Activated naive CD4-positive, alpha-beta T cell treated with anti-CD3 and anti-CD28 coated beads for 36 hours (primary cell): ENCODE measurements at regions of chrX and their contacts with region 1.

Region 1: DNA sequence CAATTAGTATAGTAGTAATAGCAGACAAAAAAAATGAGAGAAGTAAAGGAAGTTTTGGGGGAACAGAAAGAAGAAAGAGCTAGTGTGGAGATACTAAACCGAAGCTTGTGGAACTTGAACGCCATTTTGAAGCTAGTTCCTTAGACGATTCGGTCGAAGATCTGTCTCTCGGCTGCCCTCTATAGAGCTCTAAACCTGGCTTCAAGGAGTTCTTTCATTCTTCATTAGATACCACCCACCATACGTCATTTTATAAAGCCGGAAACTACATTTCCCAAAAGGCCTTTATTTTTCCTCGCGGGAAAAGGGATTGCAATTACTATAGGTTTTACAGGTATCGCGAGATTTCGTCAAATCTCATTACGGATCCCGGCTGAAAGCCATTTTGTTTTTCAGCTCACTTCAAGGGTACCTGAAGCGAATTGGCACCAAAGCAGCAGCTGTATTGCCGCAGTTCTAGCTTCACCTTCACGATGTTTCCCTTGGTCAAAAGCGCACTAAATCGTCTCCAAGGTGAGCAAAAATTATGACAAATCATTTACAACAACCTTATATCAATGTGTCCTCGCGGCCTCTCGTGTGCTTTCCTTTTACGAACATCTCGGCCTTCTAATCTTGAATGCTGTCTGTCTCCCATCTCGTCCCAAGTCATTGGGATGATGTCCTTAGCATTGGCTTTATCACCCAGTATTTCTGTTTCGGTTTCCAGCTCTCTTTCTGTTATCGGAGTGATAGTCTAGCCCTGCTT is at the start of gene COX7B:
- DNase-seq: peak; percentile 76
- H3K4me3 Mint-ChIP-seq: peak within 1 kb of the TSS; percentile 92
- H3K27ac Mint-ChIP-seq: peak within 1 kb of the TSS; percentile 95
- H3K4me1 Mint-ChIP-seq: peaks cover 17% of the 10 kb centered on the region
- H3K27me3 Mint-ChIP-seq: no peaks in the 10 kb centered on the region
- total RNA-seq, gene COX7B: 363 to 367 TPM

Region 2: GRCh38 chrX:76172325-76172893 is 1726.8 kb before region 1 on chrX:
- CTCF ChIA-PET with region 1: no interaction called
- intact Hi-C with region 1: loop called (anchors 5 kb)
- DNase-seq: no peak
- H3K4me3 Mint-ChIP-seq: peak overlapping the region; percentile 92
- H3K27ac Mint-ChIP-seq: peak overlapping the region; percentile 93
- H3K4me1 Mint-ChIP-seq: peaks cover 53% of the 10 kb centered on the region
- H3K27me3 Mint-ChIP-seq: no peaks in the 10 kb centered on the region

Region 3: DNA sequence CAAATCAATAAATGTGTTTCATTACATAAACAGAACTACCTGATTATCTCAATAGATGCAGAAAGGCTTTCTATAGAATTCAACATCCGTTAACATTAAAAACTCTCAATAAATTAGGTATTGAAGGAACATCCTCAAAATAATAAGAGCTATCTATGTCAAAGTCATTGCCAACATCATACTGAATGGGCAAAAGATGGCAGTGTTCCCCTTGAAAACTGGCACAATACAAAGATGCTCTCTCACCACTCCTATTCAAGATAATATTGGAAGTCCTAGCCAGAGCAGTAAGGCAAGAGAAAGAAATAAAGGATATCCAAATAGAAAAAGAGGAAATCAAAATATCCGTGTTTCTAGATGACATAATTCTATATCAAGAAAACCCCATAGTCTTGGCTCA is 1005.3 kb before region 1 on chrX:
- CTCF ChIA-PET with region 1: no interaction called
- intact Hi-C with region 1: loop called (anchors 10 kb)
- DNase-seq: no peak
- H3K4me3 Mint-ChIP-seq: no peak overlapping the region
- H3K27ac Mint-ChIP-seq: no peak overlapping the region
- H3K4me1 Mint-ChIP-seq: no peaks in the 10 kb centered on the region
- H3K27me3 Mint-ChIP-seq: no peaks in the 10 kb centered on the region

Region 4: GRCh38 chrX:77422886-77423648 is 476.2 kb before region 1 on chrX:
- CTCF ChIA-PET with region 1: no interaction called
- intact Hi-C with region 1: no loop called
- DNase-seq: no peak
- H3K4me3 Mint-ChIP-seq: no peak overlapping the region
- H3K27ac Mint-ChIP-seq: no peak overlapping the region
- H3K4me1 Mint-ChIP-seq: no peaks in the 10 kb centered on the region
- H3K27me3 Mint-ChIP-seq: no peaks in the 10 kb centered on the region

Region 5: GRCh38 chrX:77505227-77505626 is 394.0 kb before region 1 on chrX:
- CTCF ChIA-PET with region 1: no interaction called
- intact Hi-C with region 1: loop called (anchors 10 kb)
- DNase-seq: no peak
- H3K4me3 Mint-ChIP-seq: no peak overlapping the region
- H3K27ac Mint-ChIP-seq: peak overlapping the region; percentile 56
- H3K4me1 Mint-ChIP-seq: peaks cover 12% of the 10 kb centered on the region
- H3K27me3 Mint-ChIP-seq: no peaks in the 10 kb centered on the region

Region 6: GRCh38 chrX:77785486-77786364 is 113.5 kb before region 1 on chrX and contains the start of gene ATRX:
- CTCF ChIA-PET with region 1: interaction called, 5 read pairs
- intact Hi-C with region 1: loop called (anchors 1 kb)
- DNase-seq: peak; percentile 80
- H3K4me3 Mint-ChIP-seq: peak within 1 kb of the TSS; percentile 99
- H3K27ac Mint-ChIP-seq: peak within 1 kb of the TSS; percentile 100
- H3K4me1 Mint-ChIP-seq: peaks cover 17% of the 10 kb centered on the region
- H3K27me3 Mint-ChIP-seq: no peaks in the 10 kb centered on the region
- total RNA-seq, gene ATRX: 49.2 to 49.9 TPM

Region 7: DNA sequence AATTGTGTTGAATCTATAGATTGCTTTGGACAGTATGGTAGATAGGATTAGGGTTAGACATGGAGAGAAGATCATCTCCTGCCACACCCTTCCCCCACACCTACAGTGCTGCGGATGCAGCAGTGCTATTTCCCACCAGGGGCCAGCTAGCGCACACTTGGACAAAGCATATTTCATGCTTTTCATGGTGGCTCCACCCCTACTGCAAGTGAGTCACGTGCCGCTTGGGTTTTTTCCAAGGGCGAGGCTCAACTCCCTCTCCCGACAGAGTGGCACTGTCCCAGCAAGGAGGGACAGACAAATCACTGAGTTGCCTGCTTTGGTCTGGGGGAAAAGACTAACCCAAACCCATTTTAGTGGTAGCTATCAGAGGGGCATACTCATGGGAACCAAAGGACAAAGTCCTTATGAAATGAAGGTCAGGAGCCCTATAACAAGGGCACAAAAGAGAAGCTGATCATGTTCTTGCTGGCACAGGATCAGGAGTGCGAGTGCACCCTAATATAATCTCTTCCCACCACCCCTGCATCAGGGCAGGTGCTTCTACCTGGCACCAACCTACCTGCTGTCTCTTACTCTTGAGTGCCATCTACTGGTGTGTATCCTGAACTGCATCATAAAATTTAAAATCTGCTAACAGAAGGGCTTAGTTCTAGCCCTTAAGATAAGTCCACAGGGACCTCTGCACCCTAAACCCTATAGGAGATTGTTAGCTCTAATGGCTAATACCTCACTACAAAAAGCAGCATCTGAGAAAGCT is 125.3 kb after region 1 on chrX:
- CTCF ChIA-PET with region 1: interaction called, 25 read pairs
- intact Hi-C with region 1: no loop called
- DNase-seq: peak; percentile 8
- H3K4me3 Mint-ChIP-seq: no peak overlapping the region
- H3K27ac Mint-ChIP-seq: no peak overlapping the region
- H3K4me1 Mint-ChIP-seq: peaks cover 3% of the 10 kb centered on the region
- H3K27me3 Mint-ChIP-seq: no peaks in the 10 kb centered on the region

Region 8: GRCh38 chrX:78327370-78328086 is 428.3 kb after region 1 on chrX and contains the start of gene CYSLTR1:
- CTCF ChIA-PET with region 1: no interaction called
- intact Hi-C with region 1: loop called (anchors 5 kb)
- DNase-seq: no peak
- H3K4me3 Mint-ChIP-seq: peak within 1 kb of the TSS; percentile 71
- H3K27ac Mint-ChIP-seq: peak within 1 kb of the TSS; percentile 85
- H3K4me1 Mint-ChIP-seq: peaks cover 58% of the 10 kb centered on the region
- H3K27me3 Mint-ChIP-seq: no peaks in the 10 kb centered on the region
- total RNA-seq, gene CYSLTR1: 2.1 to 2.2 TPM